Dendritic cell treated with granulocyte-macrophage colony-stimulating factor and Interleukin-4, amounts not matched to agents 40 ng/mL and 50 ng/mL, for 4 days (primary cell): ENCODE measurements at regions of chr18 and their contacts with region 1.

Region 1: GRCh38 chr18:79528846-79529245 is 133.1 kb downstream of the NFATC1 start:
- H3K4me3 Mint-ChIP-seq: no peak overlapping the region
- H3K27ac Mint-ChIP-seq: no peak overlapping the region
- H3K4me1 Mint-ChIP-seq: peaks cover 22% of the 10 kb centered on the region
- H3K27me3 Mint-ChIP-seq: peaks cover 14% of the 10 kb centered on the region

Region 2: DNA sequence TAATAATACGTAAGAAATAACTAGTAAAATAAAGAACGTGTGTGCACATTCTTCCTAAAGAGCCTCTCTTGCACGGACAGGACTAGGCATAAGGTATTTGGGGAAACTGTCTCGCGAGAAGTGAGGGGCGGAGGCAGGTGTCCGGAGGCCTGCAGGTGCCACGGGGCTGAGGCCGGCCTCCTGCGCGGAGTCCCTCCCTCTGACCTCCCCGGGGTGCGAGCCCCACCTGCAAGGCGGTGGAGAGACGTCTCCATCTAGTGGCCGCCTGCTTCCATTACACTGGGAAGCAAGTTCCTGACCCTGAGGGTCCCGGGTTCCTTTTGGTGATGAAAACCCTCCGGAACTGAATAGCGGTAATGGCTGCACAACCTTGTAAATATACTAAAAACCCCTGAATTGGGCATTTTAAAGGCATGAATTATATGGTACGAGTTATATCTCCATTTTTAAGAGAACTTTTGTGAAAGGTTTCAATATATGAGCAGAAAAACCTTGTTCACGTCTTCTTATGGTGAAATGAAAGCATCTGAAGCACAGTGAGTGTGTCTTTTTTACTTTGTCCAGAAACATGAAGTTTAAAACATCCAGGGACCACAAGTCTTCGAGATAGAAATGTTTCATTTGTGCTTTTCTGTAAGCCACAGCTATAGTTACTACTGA is 115.3 kb after region 1 on chr18:
- intact Hi-C with region 1: loop called (anchors 2 kb)
- H3K4me3 Mint-ChIP-seq: no peak overlapping the region
- H3K27ac Mint-ChIP-seq: peak overlapping the region; percentile 85
- H3K4me1 Mint-ChIP-seq: peaks cover 33% of the 10 kb centered on the region
- H3K27me3 Mint-ChIP-seq: peaks cover 10% of the 10 kb centered on the region

Region 3: GRCh38 chr18:79790996-79791972 is 262.4 kb after region 1 on chr18:
- intact Hi-C with region 1: no loop called
- H3K4me3 Mint-ChIP-seq: peak overlapping the region; percentile 21
- H3K27ac Mint-ChIP-seq: peak overlapping the region; percentile 70
- H3K4me1 Mint-ChIP-seq: peaks cover 65% of the 10 kb centered on the region
- H3K27me3 Mint-ChIP-seq: peaks cover 76% of the 10 kb centered on the region